Activated CD8-positive, alpha-beta memory T cell treated with anti-CD3 and anti-CD28 coated beads, Interleukin-2, amount 10 ng/mL, durations not matched to agents 7 days and 5 days (primary cell): ENCODE measurements at regions of chr2 and their contacts with region 1.

Region 1: GRCh38 chr2:168336864-168337263 is 89.5 kb upstream of the STK39 start:
- DNase-seq: peak; percentile 55
- ATAC-seq: peak; percentile 63
- H3K4me3 Mint-ChIP-seq: no peak overlapping the region
- H3K27ac Mint-ChIP-seq: no peak overlapping the region
- H3K4me1 Mint-ChIP-seq: no peaks in the 10 kb centered on the region
- H3K27me3 Mint-ChIP-seq: peaks cover 16% of the 10 kb centered on the region

Region 2: GRCh38 chr2:168160897-168161296 is 176.0 kb before region 1 on chr2:
- CTCF ChIA-PET with region 1: interaction called, 10 read pairs
- DNase-seq: no peak
- ATAC-seq: no peak
- H3K4me3 Mint-ChIP-seq: no peak overlapping the region
- H3K27ac Mint-ChIP-seq: no peak overlapping the region
- H3K4me1 Mint-ChIP-seq: peaks cover 16% of the 10 kb centered on the region
- H3K27me3 Mint-ChIP-seq: no peaks in the 10 kb centered on the region

Region 3: GRCh38 chr2:168323529-168324021 is 13.3 kb before region 1 on chr2:
- CTCF ChIA-PET with region 1: no interaction called
- DNase-seq: no peak
- ATAC-seq: no peak
- H3K4me3 Mint-ChIP-seq: no peak overlapping the region
- H3K27ac Mint-ChIP-seq: no peak overlapping the region
- H3K4me1 Mint-ChIP-seq: no peaks in the 10 kb centered on the region
- H3K27me3 Mint-ChIP-seq: peaks cover 44% of the 10 kb centered on the region

Region 4: DNA sequence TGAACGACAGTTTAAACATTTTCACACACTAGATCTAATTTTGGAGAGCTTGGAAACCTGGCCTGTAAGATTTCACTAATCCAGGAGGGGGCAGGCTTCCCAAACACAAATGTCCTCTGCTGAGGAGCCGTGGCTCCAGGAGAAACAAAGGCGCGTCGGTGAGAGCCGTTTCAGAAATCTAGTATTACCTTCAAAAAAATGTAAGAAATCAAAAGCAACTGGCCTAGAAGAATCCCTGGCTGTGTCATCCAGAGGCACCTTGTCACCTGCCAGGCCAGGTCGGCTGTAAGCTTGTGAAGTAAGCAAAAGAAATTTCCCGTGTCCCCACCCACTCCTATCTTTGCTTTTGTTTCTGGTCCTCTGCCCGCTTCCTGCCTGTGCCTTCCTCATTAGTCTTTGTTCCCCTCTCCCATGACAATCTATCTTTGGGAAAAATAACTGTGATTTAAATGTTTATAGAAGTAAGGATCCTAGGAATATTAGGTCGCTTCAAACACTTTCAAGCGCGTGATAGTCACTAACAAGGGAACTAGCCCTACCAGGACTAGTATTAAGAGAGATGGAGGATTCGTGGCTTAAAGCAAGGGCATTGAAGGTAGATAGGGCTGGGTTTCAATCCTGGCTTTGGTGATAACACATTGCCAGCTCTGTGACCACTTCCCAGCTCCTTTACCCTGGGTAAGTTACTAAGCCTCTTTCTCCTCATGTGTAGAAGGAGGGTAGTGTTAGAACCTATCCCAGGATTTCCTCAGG is 10.0 kb after region 1 on chr2:
- CTCF ChIA-PET with region 1: interaction called, 15 read pairs
- DNase-seq: peak; percentile 73
- ATAC-seq: peak; percentile 88
- H3K4me3 Mint-ChIP-seq: peak overlapping the region; percentile 72
- H3K27ac Mint-ChIP-seq: no peak overlapping the region
- H3K4me1 Mint-ChIP-seq: peaks cover 5% of the 10 kb centered on the region
- H3K27me3 Mint-ChIP-seq: peaks cover 22% of the 10 kb centered on the region